ENCODE measurements at regions of chr1 and their contacts with region 1.

Region 1: GRCh38 chr1:206803221-206803730 is 31.0 kb upstream of the IL10 start:
- DNase-seq: peak; percentile 51 to 95 (median 84)
- ATAC-seq: peak; percentile 90 to 96 (median 94)
- H3K4me3 ChIP-seq: no peak overlapping the region
- H3K4me3 Mint-ChIP-seq: peak overlapping the region; percentile 3 to 38 (median 21)
- H3K27ac ChIP-seq: peak overlapping the region; percentile 89
- H3K27ac Mint-ChIP-seq: peak overlapping the region; percentile 91 to 92
- H3K4me1 ChIP-seq: peaks cover 18 to 38% of the 10 kb centered on the region in 2 experiments
- H3K4me1 Mint-ChIP-seq: peaks cover 68 to 85% (median 79%) of the 10 kb centered on the region in 3 donors
- H3K27me3 ChIP-seq: no peaks in the 10 kb centered on the region
- H3K27me3 Mint-ChIP-seq: no peaks in the 10 kb centered on the region

Region 2: DNA sequence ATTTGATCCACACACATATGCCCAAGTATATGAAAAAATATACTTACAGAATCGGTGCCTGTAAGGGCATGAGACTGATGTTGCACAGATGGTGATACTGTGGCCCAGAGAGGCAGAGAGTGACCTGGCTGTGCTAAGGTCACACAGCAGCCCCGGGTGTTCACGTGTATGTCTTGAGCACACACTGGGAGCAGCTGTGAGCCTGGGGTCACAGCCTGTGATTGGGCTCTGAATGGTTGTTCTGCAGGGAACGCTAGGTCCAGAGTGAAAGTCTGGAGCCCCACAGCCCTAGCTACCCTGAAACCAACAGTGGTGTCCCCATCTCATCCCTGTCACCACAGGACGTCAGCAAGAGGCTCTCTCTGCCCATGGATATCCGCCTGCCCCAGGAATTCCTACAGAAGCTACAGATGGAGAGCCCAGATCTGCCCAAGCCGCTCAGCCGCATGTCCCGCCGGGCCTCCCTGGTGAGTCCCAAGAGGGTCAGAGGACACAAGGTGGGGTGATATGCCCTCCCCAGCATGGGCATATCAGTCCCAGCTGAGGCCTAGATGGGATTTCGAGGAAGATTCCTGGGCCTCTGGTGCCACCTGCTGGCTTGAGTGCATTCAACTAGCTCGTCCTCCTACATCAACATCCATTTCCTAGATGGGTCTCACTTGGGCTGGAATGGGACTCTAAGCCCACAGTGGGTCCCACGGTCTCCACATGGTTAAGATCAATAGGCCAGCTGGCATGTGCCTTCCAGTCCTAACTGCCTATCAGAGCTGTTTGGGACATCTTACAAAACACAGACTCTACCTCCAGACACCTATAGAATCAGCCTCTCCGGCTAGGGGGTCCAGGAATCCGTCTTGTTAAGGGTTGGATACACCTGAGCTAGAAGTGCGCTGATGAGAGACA is 1279.1 kb before region 1 on chr1:
- CTCF ChIA-PET with region 1: no interaction called
- POLR2A ChIA-PET with region 1: no interaction called
- DNase-seq: peak; percentile 26 to 83 (median 65)
- ATAC-seq: peak; percentile 46 to 62 (median 52)
- H3K4me3 ChIP-seq: no peak overlapping the region
- H3K4me3 Mint-ChIP-seq: no peak overlapping the region
- H3K27ac ChIP-seq: no peak overlapping the region
- H3K27ac Mint-ChIP-seq: no peak overlapping the region
- H3K4me1 ChIP-seq: peaks cover 0 to 6% of the 10 kb centered on the region in 2 experiments
- H3K4me1 Mint-ChIP-seq: no peaks in the 10 kb centered on the region
- H3K27me3 ChIP-seq: peaks cover 0 to 24% of the 10 kb centered on the region in 2 experiments
- H3K27me3 Mint-ChIP-seq: peaks cover 4 to 8% of the 10 kb centered on the region in 2 donors

Region 3: GRCh38 chr1:206469933-206470691 is 333.2 kb before region 1 on chr1 and contains the start of gene IKBKE:
- CTCF ChIA-PET with region 1: no interaction called
- POLR2A ChIA-PET with region 1: no interaction called
- DNase-seq: peak in 28 of 35 experiments; percentile 2 to 70 (median 30)
- ATAC-seq: peak; percentile 57 to 69 (median 64)
- H3K4me3 ChIP-seq: peak within 1 kb of the TSS; percentile 96 to 98
- H3K4me3 Mint-ChIP-seq: peak within 1 kb of the TSS; percentile 83 to 93 (median 90)
- H3K27ac ChIP-seq: peak within 1 kb of the TSS; percentile 68
- H3K27ac Mint-ChIP-seq: peak within 1 kb of the TSS; percentile 96
- H3K4me1 ChIP-seq: peaks cover 42 to 67% of the 10 kb centered on the region in 2 experiments
- H3K4me1 Mint-ChIP-seq: peaks cover 76 to 89% (median 78%) of the 10 kb centered on the region in 3 donors
- H3K27me3 ChIP-seq: no peaks in the 10 kb centered on the region
- H3K27me3 Mint-ChIP-seq: no peaks in the 10 kb centered on the region
- total RNA-seq, gene IKBKE: 60.7 to 84.7 (median 81.4) TPM

Region 4: DNA sequence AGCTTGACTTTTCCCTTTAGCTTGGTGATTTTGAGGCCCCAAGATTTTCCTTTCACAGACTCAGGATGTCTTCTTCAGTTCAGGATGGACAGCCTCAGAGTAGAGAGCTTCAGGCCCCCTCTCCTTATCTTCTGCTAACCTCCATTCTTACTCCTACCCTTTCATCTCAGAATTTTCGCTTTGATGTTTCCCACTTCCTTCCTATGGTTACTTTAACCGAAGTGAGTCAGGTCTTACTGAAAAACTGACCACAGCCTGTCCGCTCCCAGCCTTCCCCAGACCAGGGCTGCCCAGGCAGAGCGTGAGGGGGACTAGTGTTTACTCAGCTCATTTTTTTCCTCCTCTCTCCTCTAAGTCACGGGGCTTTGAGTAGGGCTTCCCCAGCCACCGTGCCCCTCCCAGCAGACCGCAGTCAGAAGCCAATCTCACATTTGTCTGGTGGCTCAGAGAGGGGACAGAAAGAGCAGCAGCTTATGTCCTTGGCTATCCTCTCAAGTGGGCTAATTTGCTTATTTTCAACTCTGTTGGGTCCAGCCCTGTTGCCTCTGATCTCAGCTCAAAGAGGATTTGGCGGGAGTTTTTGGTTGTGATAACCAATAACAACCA is 36.9 kb before region 1 on chr1:
- CTCF ChIA-PET with region 1: interaction called, 3 to 14 read pairs
- POLR2A ChIA-PET with region 1: interaction called in 1 of 2 experiments, 4 read pairs
- DNase-seq: peak; percentile 39 to 85 (median 66)
- ATAC-seq: peak; percentile 81 to 85 (median 84)
- H3K4me3 ChIP-seq: peak overlapping the region in 1 of 2 donors; percentile 6
- H3K4me3 Mint-ChIP-seq: peak overlapping the region; percentile 41 to 65 (median 58)
- H3K27ac ChIP-seq: no peak overlapping the region
- H3K27ac Mint-ChIP-seq: peak overlapping the region; percentile 2 to 40
- H3K4me1 ChIP-seq: peaks cover 38 to 61% of the 10 kb centered on the region in 2 experiments
- H3K4me1 Mint-ChIP-seq: peaks cover 64 to 75% (median 69%) of the 10 kb centered on the region in 3 donors
- H3K27me3 ChIP-seq: peaks cover 0 to 2% of the 10 kb centered on the region in 2 experiments
- H3K27me3 Mint-ChIP-seq: no peaks in the 10 kb centered on the region

Region 5: GRCh38 chr1:206816390-206817287 is 13.4 kb after region 1 on chr1:
- CTCF ChIA-PET with region 1: interaction called in 1 of 2 experiments, 15 read pairs
- POLR2A ChIA-PET with region 1: interaction called in 1 of 2 experiments, 5 read pairs
- DNase-seq: peak in 4 of 35 experiments; percentile 10 to 74 (median 22)
- ATAC-seq: peak; percentile 85 to 95 (median 86)
- H3K4me3 ChIP-seq: no peak overlapping the region
- H3K4me3 Mint-ChIP-seq: peak overlapping the region; percentile 14 to 51 (median 35)
- H3K27ac ChIP-seq: peak overlapping the region; percentile 54
- H3K27ac Mint-ChIP-seq: peak overlapping the region; percentile 88 to 91
- H3K4me1 ChIP-seq: peaks cover 4 to 9% of the 10 kb centered on the region in 2 experiments
- H3K4me1 Mint-ChIP-seq: peaks cover 29 to 43% (median 30%) of the 10 kb centered on the region in 3 donors
- H3K27me3 ChIP-seq: no peaks in the 10 kb centered on the region
- H3K27me3 Mint-ChIP-seq: no peaks in the 10 kb centered on the region

Measured in T-cell (primary cell).